Activated T-helper 1 cell treated with anti-CD3 and anti-CD28 coated beads, Interleukin-12 subunit alpha, Interleukin-12 subunit beta, Interleukin-2, Interleukin-4 antibody, amounts not matched to agents 30 ng/mL and 10 ng/mL and 1 ng/mL, durations not matched to agents 14 hours and 24 hours and 36 hours (primary cell): ENCODE measurements at regions of chr6 and their contacts with region 1.

Region 1: DNA sequence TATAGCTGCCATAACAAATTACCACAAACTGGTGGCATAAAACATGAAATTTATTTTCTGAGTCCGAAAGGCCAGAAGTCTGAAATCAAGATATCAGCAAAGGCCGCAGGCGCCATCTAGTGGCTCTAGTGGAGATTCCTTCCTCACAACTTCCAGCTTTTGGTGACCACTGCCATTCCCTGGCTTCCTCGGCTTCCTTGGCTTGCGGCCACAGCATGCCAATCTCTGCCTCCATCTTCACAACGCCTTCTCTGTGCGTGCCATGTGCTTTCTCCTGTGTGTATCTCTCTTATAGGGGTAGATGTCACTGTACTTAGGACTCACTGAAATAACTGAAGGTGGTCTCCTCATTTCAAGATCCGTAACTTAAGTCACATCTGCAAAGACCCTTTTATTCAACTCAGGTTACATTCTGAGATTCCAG is 5.4 kb upstream of the PLAGL1 start:
- DNase-seq: peak; percentile 24
- H3K4me3 Mint-ChIP-seq: no peak overlapping the region
- H3K27ac Mint-ChIP-seq: no peak overlapping the region
- H3K4me1 Mint-ChIP-seq: no peaks in the 10 kb centered on the region
- H3K27me3 Mint-ChIP-seq: peaks cover 25% of the 10 kb centered on the region

Region 2: DNA sequence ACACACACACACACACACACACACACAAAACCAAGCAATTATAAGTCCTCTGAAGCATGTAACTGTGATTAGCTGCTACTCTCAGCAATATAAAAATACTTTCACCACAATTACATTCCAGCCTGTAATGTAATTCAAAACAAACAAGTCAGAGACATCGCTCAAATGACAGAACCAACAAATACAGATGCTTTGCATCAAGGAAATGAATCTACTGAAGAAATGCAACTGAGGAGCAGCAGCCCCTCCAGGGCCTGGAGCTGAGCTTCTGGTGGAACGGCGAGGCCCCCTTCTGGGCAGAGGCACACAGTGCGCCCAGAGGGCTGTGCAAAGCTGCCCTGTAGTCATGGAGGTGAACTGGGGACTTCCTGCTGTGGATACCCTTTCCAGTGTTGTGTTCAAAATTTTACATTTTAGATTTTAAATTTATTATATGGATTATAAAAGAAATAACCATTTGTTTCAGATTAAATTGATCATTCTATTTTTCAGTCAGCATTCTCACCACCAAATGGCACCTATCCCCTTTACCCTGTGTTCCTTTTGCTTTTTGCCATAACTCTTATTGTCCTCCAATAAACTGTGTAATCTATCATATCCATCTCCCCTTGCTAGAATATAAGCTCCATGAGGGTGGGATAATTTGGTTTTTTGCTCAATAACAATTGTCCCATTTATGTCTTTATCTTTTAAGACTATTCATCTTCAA is 586.2 kb before region 1 on chr6:
- intact Hi-C with region 1: loop called (anchors 2 kb)
- DNase-seq: peak; percentile 55
- H3K4me3 Mint-ChIP-seq: no peak overlapping the region
- H3K27ac Mint-ChIP-seq: no peak overlapping the region
- H3K4me1 Mint-ChIP-seq: no peaks in the 10 kb centered on the region
- H3K27me3 Mint-ChIP-seq: no peaks in the 10 kb centered on the region

Region 3: DNA sequence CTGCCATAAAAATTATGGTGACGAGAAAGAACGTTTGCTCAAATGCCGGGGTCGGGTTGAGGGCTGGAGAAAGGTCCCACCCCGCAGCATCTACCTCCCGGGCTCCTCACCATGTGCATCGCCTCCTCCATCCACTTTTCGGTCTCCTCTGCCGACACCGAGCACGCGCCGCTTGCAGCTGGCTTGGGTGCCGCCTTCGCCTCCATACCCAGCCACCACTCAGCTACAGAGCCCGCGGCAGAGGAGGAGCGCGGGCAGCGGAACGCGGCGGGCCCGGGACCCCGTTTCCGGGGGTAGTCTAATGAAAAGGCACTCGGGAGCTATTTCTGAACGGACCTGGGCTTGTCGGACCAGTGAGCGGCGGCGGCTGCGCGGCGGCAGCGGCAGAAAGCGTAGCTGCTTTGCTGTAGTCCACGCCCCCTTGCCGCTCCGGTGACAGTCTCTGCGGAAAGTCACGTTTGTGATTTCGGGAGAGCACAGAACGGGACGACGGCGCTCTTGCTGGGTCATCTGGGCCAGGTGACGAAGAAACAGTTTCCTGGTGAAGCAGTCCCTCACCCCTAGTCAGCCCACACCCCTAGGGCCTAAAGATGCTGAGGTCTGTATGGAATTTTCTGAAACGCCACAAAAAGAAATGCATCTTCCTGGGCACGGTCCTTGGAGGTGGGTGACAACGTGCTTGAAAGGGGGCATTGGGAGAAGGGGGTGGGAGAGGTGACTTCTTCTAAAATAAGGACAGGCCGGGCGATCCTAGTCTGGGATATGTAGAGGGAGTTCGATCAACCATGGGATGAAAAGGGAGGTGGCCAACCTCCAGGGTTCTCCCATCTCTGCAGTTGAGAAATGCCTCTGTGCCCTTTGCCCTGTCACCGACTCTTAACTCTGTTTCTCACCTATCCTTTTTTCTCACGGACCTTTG is 562.8 kb before region 1 on chr6 and contains the starts of genes ADAT2 and PEX3:
- intact Hi-C with region 1: loop called (anchors 5 kb)
- DNase-seq: peak; percentile 92
- H3K4me3 Mint-ChIP-seq: peak within 1 kb of the TSS; percentile 98
- H3K27ac Mint-ChIP-seq: peak within 1 kb of the TSS; percentile 99
- H3K4me1 Mint-ChIP-seq: peaks cover 50% of the 10 kb centered on the region
- H3K27me3 Mint-ChIP-seq: no peaks in the 10 kb centered on the region
- total RNA-seq, gene ADAT2: 39.0 and 43.6 TPM in 2 replicates
- total RNA-seq, gene PEX3: 23.6 and 25.0 TPM in 2 replicates

Region 4: GRCh38 chr6:143575440-143575839 is 438.1 kb before region 1 on chr6:
- intact Hi-C with region 1: loop called (anchors 1 kb)
- DNase-seq: peak; percentile 48
- H3K4me3 Mint-ChIP-seq: no peak overlapping the region
- H3K27ac Mint-ChIP-seq: no peak overlapping the region
- H3K4me1 Mint-ChIP-seq: peaks cover 12% of the 10 kb centered on the region
- H3K27me3 Mint-ChIP-seq: no peaks in the 10 kb centered on the region

Region 5: GRCh38 chr6:143940011-143940597 is 73.4 kb before region 1 on chr6:
- intact Hi-C with region 1: loop called (anchors 1 kb)
- DNase-seq: peak; percentile 26
- H3K4me3 Mint-ChIP-seq: no peak overlapping the region
- H3K27ac Mint-ChIP-seq: no peak overlapping the region
- H3K4me1 Mint-ChIP-seq: peaks cover 9% of the 10 kb centered on the region
- H3K27me3 Mint-ChIP-seq: peaks cover 3% of the 10 kb centered on the region

Region 6: GRCh38 chr6:144063744-144064401 is 50.4 kb after region 1 on chr6:
- intact Hi-C with region 1: loop called (anchors 2 kb)
- DNase-seq: peak; percentile 89
- H3K4me3 Mint-ChIP-seq: peak overlapping the region; percentile 83
- H3K27ac Mint-ChIP-seq: peak overlapping the region; percentile 82
- H3K4me1 Mint-ChIP-seq: peaks cover 44% of the 10 kb centered on the region
- H3K27me3 Mint-ChIP-seq: no peaks in the 10 kb centered on the region

Region 7: GRCh38 chr6:144075187-144075586 is 61.7 kb after region 1 on chr6:
- intact Hi-C with region 1: no loop called
- DNase-seq: no peak
- H3K4me3 Mint-ChIP-seq: no peak overlapping the region
- H3K27ac Mint-ChIP-seq: no peak overlapping the region
- H3K4me1 Mint-ChIP-seq: peaks cover 13% of the 10 kb centered on the region
- H3K27me3 Mint-ChIP-seq: peaks cover 10% of the 10 kb centered on the region